ENCODE measurements at regions of chr3 and their contacts with region 1.

Region 1: GRCh38 chr3:18363338-18363737 is 61.8 kb downstream of the SATB1 start:
- DNase-seq: no peak
- ATAC-seq: no peak
- H3K4me3 ChIP-seq: no peak overlapping the region
- H3K27ac ChIP-seq: no peak overlapping the region
- H3K4me1 ChIP-seq: no peaks in the 10 kb centered on the region
- H3K27me3 ChIP-seq: no peaks in the 10 kb centered on the region
- CTCF ChIP-seq: no peak
- POLR2A ChIP-seq: no peak
- RAD21 ChIP-seq: no peak

Region 2: GRCh38 chr3:17820704-17821103 is 542.6 kb before region 1 on chr3:
- CTCF ChIA-PET with region 1: no interaction called
- POLR2A ChIA-PET with region 1: no interaction called
- dilution Hi-C with region 1: no loop called
- in situ Hi-C with region 1: no loop called
- intact Hi-C with region 1: no loop called
- DNase-seq: no peak
- ATAC-seq: no peak
- H3K4me3 ChIP-seq: no peak overlapping the region
- H3K27ac ChIP-seq: no peak overlapping the region
- H3K4me1 ChIP-seq: no peaks in the 10 kb centered on the region
- H3K27me3 ChIP-seq: no peaks in the 10 kb centered on the region; the same call in 1 of the 2 replicates
- CTCF ChIP-seq: no peak
- POLR2A ChIP-seq: no peak
- RAD21 ChIP-seq: no peak

Region 3: GRCh38 chr3:18288243-18288642 is 75.1 kb before region 1 on chr3:
- CTCF ChIA-PET with region 1: no interaction called
- POLR2A ChIA-PET with region 1: no interaction called
- dilution Hi-C with region 1: no loop called
- in situ Hi-C with region 1: no loop called
- intact Hi-C with region 1: loop called (anchors 2 kb)
- DNase-seq: no peak
- ATAC-seq: no peak
- H3K4me3 ChIP-seq: no peak overlapping the region
- H3K27ac ChIP-seq: no peak overlapping the region
- H3K4me1 ChIP-seq: no peaks in the 10 kb centered on the region
- H3K27me3 ChIP-seq: no peaks in the 10 kb centered on the region
- CTCF ChIP-seq: no peak
- POLR2A ChIP-seq: no peak
- RAD21 ChIP-seq: no peak

Region 4: DNA sequence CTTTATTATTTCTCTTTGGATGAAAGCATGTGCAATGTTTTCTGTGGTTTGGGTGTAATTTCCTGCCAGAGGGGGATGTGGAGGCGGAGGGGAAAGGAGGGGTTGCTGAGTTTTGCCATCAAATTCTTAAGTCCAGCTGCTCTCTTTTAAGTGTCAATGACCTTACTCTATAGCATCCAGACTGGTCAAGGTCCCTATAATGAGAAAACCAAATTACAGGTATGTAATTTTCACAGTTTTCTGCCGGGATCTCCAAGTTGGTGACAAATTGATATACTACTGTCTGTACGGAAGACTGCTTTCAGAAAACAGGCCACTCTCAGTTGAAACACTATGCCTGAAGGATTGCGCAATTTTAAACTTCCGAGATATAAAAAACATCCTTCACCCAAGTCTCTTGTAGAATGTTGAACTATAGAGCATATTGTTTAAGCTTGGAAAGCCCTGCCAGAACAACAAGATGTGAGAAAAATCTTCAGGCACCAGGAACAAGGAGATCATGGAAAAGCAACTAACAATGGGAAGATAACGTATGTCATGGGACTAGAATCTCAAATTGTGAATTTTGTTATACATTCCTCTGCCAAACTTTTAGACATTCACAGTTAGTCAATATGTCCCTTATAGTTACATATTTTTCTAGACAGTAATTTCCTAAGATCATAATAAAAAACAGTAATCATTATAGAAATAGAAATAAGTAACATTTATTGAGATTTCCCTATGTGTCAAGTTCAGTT is 362.5 kb after region 1 on chr3:
- CTCF ChIA-PET with region 1: no interaction called
- POLR2A ChIA-PET with region 1: no interaction called
- dilution Hi-C with region 1: no loop called
- in situ Hi-C with region 1: no loop called
- intact Hi-C with region 1: no loop called
- DNase-seq: no peak
- ATAC-seq: no peak
- H3K4me3 ChIP-seq: no peak overlapping the region
- H3K27ac ChIP-seq: no peak overlapping the region
- H3K4me1 ChIP-seq: no peaks in the 10 kb centered on the region
- H3K27me3 ChIP-seq: no peaks in the 10 kb centered on the region
- CTCF ChIP-seq: no peak
- POLR2A ChIP-seq: no peak
- RAD21 ChIP-seq: no peak